Common myeloid progenitor, CD34-positive (primary cell): ENCODE measurements at regions of chr2 and their contacts with region 1.

Region 1: DNA sequence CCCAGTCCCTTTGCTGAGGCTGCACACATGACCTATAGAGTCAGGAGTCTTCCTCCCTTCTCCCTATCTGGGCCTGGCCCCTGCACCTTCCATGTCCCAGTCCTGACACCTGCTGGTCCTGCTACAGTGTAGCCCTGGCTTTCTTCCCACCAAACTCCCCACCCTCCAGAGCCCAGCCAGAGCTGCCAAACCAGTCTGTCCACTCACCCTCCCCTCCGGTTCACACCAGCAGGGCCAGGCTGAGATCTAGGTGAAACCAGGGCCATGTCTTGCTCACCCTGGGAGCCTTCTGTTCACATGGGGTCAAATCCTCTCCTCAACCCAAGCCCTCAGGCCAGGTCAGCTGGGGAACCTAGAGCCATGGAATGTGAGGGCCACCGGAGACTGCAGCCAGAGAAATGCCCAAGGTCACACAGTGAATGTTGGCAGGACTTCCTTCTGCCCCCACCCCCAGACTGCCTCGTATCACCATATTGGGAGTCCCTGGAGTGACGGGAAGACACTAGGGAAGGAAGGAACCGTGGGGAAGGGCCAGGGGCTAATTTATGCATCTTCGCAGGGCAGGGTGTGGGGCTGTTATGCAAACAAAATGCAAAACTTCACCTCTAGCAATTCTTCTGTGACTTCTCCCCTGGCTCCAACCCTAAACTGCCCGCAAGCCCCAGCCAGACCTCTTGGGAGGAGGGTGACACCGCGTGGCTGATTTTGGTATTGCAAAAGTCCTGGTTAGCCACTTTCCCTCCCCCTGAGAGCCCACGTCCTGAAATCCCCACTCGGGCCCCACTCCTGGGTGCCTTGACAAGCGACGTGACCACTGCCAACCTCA is 14.6 kb downstream of the TNS1 start:
- DNase-seq: peak; percentile 59 to 82 (median 72)
- H3K4me3 ChIP-seq: no peak overlapping the region
- H3K27ac ChIP-seq: no peak overlapping the region
- H3K4me1 ChIP-seq: no peaks in the 10 kb centered on the region
- H3K27me3 ChIP-seq: no peaks in the 10 kb centered on the region

Region 2: DNA sequence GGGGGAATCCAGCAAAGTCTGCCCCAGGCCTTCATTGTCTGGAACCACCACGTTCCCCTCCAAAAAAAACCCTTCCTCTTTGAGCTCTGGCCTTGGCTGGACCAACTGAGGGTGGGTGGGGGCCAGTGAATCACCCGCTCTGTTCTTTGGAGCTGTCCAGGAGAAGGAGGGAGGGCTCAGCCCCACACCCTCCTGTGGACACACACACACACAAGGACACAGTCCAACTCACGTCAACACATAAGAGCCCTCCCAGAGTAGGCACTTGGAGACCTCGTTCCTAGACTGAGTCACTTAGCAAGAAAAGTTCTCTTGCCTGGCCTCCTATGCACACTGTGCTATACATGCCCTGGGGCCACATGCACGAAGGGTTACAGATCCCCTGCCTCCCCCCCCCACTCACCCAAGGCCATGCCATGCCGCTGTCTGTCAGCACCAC is 15.8 kb after region 1 on chr2:
- CTCF ChIA-PET with region 1: interaction called, 41 read pairs
- POLR2A ChIA-PET with region 1: no interaction called
- DNase-seq: no peak
- H3K4me3 ChIP-seq: no peak overlapping the region
- H3K27ac ChIP-seq: peak overlapping the region in 1 of 2 experiments; percentile 63
- H3K4me1 ChIP-seq: peaks cover 0 to 30% (median 19%) of the 10 kb centered on the region in 4 experiments
- H3K27me3 ChIP-seq: no peaks in the 10 kb centered on the region